Cardiac septum (tissue), 1 donor: ENCODE measurements at regions of chr6 and their contacts with region 1.

Region 1: DNA sequence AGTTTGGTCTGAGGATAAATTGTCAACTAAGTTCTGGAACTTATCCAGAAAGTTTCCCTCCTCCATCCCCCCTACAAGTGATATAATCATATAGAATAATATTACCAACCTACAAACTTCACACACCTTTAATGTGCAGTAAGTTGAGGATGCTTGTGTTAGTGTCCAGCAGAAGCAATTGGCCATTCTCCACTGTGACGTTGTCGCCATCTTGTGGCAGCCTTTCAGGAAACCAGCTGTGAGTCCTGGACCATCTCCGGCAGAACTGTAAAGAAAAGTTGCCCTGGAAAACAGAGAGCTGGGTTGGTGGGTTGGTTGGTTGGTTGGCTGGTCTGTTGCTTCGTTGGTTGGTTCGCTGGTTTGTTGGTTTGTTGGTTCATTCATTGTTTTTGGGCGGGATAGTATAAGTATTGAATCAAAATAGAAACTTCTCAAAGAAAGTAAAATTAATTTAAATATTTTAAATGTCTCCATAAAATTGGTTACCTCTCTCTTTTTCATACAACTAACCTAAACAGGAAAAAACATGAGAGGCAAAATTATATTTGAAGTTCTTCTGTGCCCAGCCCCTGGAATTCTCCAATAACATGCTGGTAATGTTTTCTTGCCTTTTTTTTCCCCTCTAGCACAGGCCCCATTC is 127.5 kb downstream of the PKHD1 start:
- DNase-seq: peak; percentile 81

Region 2: GRCh38 chr6:50816115-50816675 is 1143.7 kb before region 1 on chr6:
- intact Hi-C with region 1: loop called (anchors 10 kb)
- DNase-seq: no peak